ENCODE measurements at regions of chr1 and their contacts with region 1.

Region 1: DNA sequence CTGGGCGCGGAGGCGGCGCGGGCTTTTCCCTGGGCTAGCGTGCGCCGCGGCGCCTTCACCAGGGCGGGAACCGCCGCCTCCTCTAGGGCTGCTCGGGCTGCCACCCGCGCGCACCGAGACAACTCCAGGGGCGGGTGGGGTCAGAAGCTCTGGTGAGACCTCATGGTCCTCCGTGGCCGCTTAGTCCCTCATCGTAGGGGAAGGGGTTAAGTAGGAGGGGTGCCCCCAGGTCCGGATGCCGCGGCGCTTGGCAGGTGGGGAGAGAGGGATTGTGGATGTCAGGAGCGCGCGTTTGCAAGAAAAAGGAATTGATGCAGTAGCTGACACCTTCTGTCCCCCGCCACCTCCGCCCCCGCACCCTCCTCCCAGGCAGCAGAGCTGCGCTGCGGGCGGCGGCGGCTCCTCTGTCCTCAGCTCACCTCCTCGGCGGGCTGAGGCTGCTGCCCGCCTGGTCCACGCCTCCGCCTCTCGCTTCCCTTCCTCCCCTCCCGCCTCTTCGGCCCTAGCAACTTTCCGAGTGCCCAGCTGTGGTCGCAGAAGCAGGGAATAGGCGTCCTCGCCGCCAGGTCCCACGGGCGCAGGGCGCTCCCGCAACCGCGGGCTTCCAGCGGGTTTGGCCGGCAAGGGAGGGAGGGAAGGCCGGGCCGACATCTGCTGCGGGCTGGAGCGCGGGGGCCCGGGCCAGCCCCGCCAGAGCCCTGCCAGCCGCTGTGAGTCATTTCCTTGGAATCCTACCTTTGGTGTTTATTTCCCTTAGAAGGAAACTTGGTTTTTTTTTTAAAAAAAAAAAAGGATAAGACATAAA is 822 bp downstream of the SERTAD4 start:
- DNase-seq: peak; percentile 80
- H3K4me3 ChIP-seq: peak overlapping the region; percentile 60 to 82 (median 78)
- H3K27ac ChIP-seq: peak overlapping the region; percentile 42
- H3K4me1 ChIP-seq: peaks cover 9% of the 10 kb centered on the region
- H3K27me3 ChIP-seq: no peaks in the 10 kb centered on the region
- CTCF ChIP-seq: no peak

Region 2: GRCh38 chr1:210123924-210124589 is 109.4 kb before region 1 on chr1:
- CTCF ChIA-PET with region 1: no interaction called
- dilution Hi-C with region 1: no loop called
- in situ Hi-C with region 1: no loop called
- intact Hi-C with region 1: no loop called
- DNase-seq: peak; percentile 62
- H3K4me3 ChIP-seq: no peak overlapping the region
- H3K27ac ChIP-seq: no peak overlapping the region
- H3K4me1 ChIP-seq: peaks cover 6% of the 10 kb centered on the region
- H3K27me3 ChIP-seq: no peaks in the 10 kb centered on the region
- CTCF ChIP-seq: no peak

Region 3: GRCh38 chr1:210250998-210251679 is 17.7 kb after region 1 on chr1:
- CTCF ChIA-PET with region 1: interaction called, 3 read pairs
- dilution Hi-C with region 1: no loop called
- in situ Hi-C with region 1: no loop called
- intact Hi-C with region 1: loop called (anchors 1 kb)
- DNase-seq: peak; percentile 70
- H3K4me3 ChIP-seq: peak overlapping the region; percentile 30 to 58 (median 44)
- H3K27ac ChIP-seq: no peak overlapping the region
- H3K4me1 ChIP-seq: peaks cover 16% of the 10 kb centered on the region
- H3K27me3 ChIP-seq: no peaks in the 10 kb centered on the region
- CTCF ChIP-seq: no peak

Measured in mammary epithelial cell (primary cell).